Activated CD4-positive, alpha-beta memory T cell treated with anti-CD3 and anti-CD28 coated beads for 36 hours (primary cell): ENCODE measurements at regions of chr4 and their contacts with region 1.

Region 1: GRCh38 chr4:80989921-80990544 is 40.5 kb upstream of the BMP3 start:
- DNase-seq: no peak
- H3K4me3 Mint-ChIP-seq: no peak overlapping the region
- H3K27ac Mint-ChIP-seq: no peak overlapping the region
- H3K4me1 Mint-ChIP-seq: peaks cover 2% of the 10 kb centered on the region
- H3K27me3 Mint-ChIP-seq: peaks cover 3% of the 10 kb centered on the region

Region 2: DNA sequence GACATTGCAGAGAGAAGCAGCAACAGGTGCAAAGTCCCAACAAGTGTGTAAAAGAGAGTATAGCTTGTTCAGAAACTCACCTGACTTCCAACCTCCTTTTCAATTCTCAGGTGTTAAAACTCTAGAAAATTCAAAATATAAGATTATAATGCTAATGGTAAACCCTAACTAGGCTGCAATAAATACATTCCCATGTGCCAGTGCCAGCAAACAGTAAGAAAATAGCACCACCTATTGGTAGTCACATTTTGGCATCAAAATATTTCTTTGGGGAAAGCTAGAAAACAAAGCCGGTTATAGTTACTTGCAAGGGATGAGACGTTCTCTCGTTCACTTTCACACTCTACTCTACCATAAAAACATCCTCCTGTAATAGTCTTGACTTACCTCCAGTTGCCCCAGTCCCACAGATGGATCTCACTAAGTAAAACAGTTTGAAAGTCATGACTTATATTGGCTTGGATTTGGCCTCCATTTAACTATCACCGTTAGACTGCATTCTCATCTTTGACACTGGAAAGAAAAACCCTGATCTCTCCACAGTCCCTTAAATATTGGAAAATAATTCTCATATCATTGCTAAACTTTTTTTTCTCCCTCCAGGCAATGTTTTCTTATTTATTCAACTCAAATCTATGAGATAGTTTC is 50.1 kb after region 1 on chr4:
- CTCF ChIA-PET with region 1: interaction called, 15 read pairs
- POLR2A ChIA-PET with region 1: no interaction called
- intact Hi-C with region 1: no loop called
- DNase-seq: no peak
- H3K4me3 Mint-ChIP-seq: no peak overlapping the region
- H3K27ac Mint-ChIP-seq: no peak overlapping the region
- H3K4me1 Mint-ChIP-seq: no peaks in the 10 kb centered on the region
- H3K27me3 Mint-ChIP-seq: peaks cover 8% of the 10 kb centered on the region

Region 3: DNA sequence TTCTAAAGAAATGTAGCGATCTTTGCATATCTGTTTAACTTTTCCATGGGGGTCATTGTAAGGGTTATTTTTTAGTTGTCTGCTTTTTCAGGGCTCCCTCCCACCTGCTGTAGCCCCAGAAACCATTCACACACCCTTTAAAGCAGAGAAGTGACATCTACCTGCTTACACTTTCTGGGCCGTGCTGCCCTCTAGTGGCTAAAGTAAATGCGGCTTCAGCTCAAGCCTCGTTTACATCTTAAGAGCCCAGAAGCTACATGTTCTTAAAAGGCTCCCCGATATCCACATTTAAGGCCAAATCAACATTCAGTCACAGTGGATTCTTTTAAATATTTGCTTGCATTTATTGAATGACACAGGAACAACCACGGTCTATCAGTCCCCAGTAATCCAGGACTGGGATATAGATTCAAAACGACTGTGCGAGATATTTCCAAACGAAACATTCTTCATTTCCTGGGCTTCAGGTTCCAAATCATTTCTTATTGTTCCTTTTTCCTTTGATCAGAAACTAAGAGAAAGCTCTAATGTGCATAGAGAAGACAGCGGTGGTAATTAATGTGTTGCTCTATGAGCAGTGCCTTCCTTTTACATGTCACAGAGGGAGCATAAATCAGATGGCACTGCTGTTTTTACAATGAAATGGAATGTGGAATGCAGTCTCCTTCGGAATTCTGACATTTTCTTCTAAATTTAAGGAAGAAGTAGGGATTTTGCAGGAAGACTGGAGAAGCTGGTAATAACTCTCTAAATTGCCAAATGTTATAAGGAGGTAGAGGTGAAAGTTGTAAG is 361.8 kb after region 1 on chr4:
- CTCF ChIA-PET with region 1: no interaction called
- POLR2A ChIA-PET with region 1: no interaction called
- intact Hi-C with region 1: no loop called
- DNase-seq: peak; percentile 75
- H3K4me3 Mint-ChIP-seq: no peak overlapping the region
- H3K27ac Mint-ChIP-seq: no peak overlapping the region
- H3K4me1 Mint-ChIP-seq: no peaks in the 10 kb centered on the region
- H3K27me3 Mint-ChIP-seq: peaks cover 3% of the 10 kb centered on the region